Mammary epithelial cell (primary cell): ENCODE measurements at regions of chr10 and their contacts with region 1.

Region 1: GRCh38 chr10:101214446-101215396 is 14.5 kb downstream of the LBX1 start:
- DNase-seq: peak; percentile 47
- H3K4me3 ChIP-seq: no peak overlapping the region
- H3K27ac ChIP-seq: no peak overlapping the region
- H3K4me1 ChIP-seq: peaks cover 14% of the 10 kb centered on the region
- H3K27me3 ChIP-seq: peaks cover 20% of the 10 kb centered on the region
- CTCF ChIP-seq: peak; percentile 52 to 91

Region 2: GRCh38 chr10:101141616-101142532 is 72.8 kb before region 1 on chr10:
- CTCF ChIA-PET with region 1: interaction called, 10 read pairs
- dilution Hi-C with region 1: no loop called
- in situ Hi-C with region 1: no loop called
- intact Hi-C with region 1: no loop called
- DNase-seq: peak; percentile 74
- H3K4me3 ChIP-seq: no peak overlapping the region
- H3K27ac ChIP-seq: no peak overlapping the region
- H3K4me1 ChIP-seq: peaks cover 13% of the 10 kb centered on the region
- H3K27me3 ChIP-seq: peaks cover 30% of the 10 kb centered on the region
- CTCF ChIP-seq: peak; percentile 92 to 97

Region 3: GRCh38 chr10:101272229-101272868 is 57.6 kb after region 1 on chr10:
- CTCF ChIA-PET with region 1: no interaction called
- dilution Hi-C with region 1: no loop called
- in situ Hi-C with region 1: no loop called
- intact Hi-C with region 1: loop called (anchors 1 kb)
- DNase-seq: peak; percentile 50
- H3K4me3 ChIP-seq: no peak overlapping the region
- H3K27ac ChIP-seq: no peak overlapping the region
- H3K4me1 ChIP-seq: peaks cover 2% of the 10 kb centered on the region
- H3K27me3 ChIP-seq: no peaks in the 10 kb centered on the region
- CTCF ChIP-seq: peak; percentile 76 to 89

Region 4: DNA sequence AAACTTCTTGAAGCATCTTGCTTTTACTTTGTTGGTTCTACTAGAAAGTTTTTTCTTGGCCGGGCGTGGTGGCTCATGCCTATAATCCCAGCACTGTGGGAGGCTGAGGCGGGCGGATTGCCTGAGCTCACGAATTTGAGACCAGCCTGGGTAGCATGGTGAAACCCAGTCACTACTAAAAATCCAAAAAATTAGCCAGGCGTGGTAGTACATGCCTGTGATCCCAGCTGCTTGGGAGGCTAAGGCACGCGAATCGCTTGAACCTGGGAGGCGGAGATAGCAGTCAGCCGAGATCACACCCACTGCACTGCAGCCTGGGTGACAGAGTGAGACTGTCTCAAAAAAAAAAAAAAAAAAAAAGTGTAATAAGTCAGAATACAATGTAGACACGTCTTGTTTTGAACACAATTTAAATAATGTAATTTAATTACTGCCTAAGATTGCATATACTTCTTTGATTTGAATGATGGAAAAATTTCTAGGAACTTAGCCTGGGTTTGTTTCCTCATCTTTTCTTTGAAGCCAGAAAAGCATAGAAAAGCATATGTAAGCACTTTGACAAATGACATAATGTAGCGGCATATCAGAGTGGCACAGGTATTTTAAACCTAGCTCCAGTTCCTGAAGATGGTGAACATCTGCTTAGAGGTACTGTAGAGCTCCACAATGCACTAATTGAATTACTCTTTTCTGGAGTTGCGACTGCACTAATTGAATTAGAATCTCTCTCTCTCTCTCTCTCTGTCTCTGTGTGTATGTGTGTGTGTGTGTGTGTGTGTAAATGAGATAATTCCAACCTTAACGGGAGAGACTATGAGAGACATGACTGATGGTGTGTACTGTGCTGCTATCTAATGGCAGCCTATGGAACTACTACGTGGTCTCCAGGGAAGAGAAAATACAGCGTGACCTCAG is 227.1 kb after region 1 on chr10:
- CTCF ChIA-PET with region 1: interaction called, 3 read pairs
- dilution Hi-C with region 1: no loop called
- in situ Hi-C with region 1: loop called (anchors 5 kb)
- intact Hi-C with region 1: loop called (anchors 1 kb)
- DNase-seq: peak; percentile 67
- H3K4me3 ChIP-seq: no peak overlapping the region
- H3K27ac ChIP-seq: no peak overlapping the region
- H3K4me1 ChIP-seq: no peaks in the 10 kb centered on the region
- H3K27me3 ChIP-seq: no peaks in the 10 kb centered on the region
- CTCF ChIP-seq: peak; percentile 76 to 86

Region 5: DNA sequence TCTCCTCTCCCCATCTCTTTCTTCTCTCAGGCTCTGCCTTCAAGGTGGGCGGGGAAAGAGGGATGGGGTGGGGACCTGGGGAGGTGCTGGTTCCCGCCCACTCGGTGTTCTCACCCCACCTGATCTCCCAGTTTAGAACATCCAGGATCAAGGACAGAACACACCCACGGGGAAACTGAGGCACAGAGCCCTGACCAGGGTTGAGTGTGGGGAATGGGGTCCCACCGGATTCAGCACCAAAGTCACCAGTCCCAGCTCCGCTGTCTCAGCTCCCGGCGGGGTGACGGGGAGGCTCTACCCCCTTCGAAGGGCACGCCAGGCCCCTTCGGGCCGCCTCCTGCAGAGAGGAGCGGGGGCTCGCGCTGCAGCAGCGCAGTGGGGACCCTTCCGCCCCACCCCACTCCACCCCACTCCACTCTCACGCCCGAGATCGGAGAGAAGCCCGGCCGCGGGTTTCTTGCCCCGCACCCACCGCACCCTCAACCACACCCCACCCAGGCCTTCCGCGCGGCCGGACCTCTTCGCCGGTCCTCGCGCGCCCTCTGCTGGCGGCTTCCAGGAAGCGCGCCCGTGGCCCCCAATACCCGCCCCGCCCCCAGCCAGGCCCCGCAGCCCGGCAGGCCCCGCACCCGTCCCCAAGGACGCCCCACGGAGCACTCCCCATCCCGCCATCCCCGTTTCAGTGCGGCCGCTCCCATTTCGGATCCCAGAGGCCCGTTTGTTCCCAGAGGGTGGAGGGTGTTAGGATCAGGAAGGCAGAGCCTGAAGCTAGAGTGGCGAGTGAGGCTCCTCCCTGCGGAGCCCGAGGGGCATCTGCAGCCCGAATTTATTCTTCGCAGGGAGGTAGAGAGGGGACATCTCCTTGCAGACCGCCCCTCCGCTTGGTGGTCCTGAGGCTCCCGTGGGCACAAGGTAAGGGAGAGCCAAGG is 355.4 kb after region 1 on chr10:
- CTCF ChIA-PET with region 1: interaction called, 4 read pairs
- dilution Hi-C with region 1: no loop called
- in situ Hi-C with region 1: loop called (anchors 5 to 10 kb)
- intact Hi-C with region 1: loop called (anchors 1 kb)
- DNase-seq: peak; percentile 61
- H3K4me3 ChIP-seq: peak overlapping the region; percentile 56 to 80 (median 72)
- H3K27ac ChIP-seq: no peak overlapping the region
- H3K4me1 ChIP-seq: peaks cover 19% of the 10 kb centered on the region
- H3K27me3 ChIP-seq: no peaks in the 10 kb centered on the region
- CTCF ChIP-seq: peak; percentile 24 to 75

Region 6: DNA sequence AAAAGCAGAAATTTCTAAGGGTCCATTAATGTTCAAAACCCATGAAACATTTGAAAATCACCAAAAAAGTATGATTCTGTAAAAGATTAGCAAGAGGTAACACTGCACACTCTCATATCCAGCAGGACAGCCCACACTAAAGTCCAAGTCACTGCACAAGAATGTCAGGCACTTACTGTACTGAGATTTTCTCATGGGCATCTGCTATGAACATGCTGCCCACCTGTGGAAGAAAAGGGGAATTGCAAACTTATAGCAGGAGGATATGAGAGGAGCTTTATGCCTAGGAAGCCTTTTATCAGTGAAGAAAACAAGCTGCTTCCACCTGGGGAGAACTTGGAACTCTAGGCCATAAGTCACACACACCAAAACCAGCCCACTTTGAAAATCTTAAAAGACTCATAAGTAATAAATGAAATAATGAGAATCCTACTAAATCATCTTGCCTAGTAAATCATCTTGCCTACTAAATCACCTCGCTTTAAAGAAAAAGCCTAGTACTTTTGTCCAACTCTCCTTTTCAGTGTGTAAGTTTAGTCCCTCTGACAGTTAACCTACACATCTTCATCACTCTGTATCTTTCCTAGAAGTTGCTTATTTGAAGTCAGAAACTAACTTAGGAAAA is 795.2 kb after region 1 on chr10:
- CTCF ChIA-PET with region 1: interaction called, 3 read pairs
- dilution Hi-C with region 1: no loop called
- in situ Hi-C with region 1: no loop called
- intact Hi-C with region 1: loop called (anchors 5 kb)
- DNase-seq: peak; percentile 79
- H3K4me3 ChIP-seq: no peak overlapping the region
- H3K27ac ChIP-seq: no peak overlapping the region
- H3K4me1 ChIP-seq: peaks cover 6% of the 10 kb centered on the region
- H3K27me3 ChIP-seq: no peaks in the 10 kb centered on the region
- CTCF ChIP-seq: peak; percentile 99 to 100